Activated CD4-positive, alpha-beta memory T cell treated with anti-CD3 and anti-CD28 coated beads, Interleukin-2, amount 10 ng/mL, durations not matched to agents 7 days and 5 days (primary cell): ENCODE measurements at regions of chr19 and their contacts with region 1.

Region 1: DNA sequence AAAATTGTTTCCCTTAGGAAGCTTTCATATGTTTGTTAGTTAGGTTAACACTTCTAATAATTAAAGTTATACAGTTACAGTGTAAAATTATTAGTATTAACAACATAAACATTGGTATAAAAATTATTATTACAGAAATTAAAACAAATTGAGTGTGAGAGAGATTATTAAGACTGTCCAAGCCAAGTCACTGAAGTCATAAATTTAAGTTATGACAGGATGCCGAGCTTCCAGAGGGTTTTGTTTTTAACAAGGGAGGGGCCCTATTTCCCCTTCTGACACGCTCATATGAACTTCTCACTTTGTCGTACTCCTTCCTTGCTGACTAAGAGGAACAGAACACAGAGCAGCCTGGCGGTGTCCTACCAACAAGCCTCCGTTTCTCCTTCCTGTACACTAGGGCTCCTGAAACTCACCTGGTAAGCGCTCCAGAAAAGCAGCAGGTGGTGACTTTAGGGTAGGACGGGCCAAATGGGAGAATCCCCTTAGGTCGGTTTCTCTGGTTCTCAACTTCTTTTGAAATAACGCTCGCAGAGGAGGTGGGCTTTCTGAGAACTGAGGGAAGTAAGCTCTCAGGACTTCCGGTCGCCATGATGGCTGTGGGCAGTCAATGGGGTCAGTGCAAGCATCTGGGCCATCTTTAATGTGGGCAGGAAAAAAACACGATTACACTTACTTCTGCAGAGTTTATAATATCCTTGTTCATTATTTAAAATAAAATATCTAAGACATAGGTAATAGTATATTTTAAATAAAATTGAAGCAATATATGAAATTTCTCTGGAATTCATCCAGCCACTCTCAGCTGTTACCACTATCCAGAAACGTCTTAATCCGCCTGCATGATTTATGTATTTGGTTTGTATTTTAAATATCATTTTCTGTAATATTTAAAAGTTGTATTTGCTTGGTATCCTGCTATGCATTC is at the start of gene CARD8:
- DNase-seq: peak; percentile 86
- H3K4me3 Mint-ChIP-seq: peak within 1 kb of the TSS; percentile 98
- H3K27ac Mint-ChIP-seq: peak within 1 kb of the TSS; percentile 95
- H3K4me1 Mint-ChIP-seq: peaks cover 68% of the 10 kb centered on the region
- H3K27me3 Mint-ChIP-seq: no peaks in the 10 kb centered on the region
- total RNA-seq, gene CARD8: 247 to 253 TPM

Region 2: GRCh38 chr19:48170038-48170812 is 85.4 kb before region 1 on chr19 and contains the starts of genes LIG1 and ZSWIM9:
- CTCF ChIA-PET with region 1: interaction called, 5 read pairs
- POLR2A ChIA-PET with region 1: interaction called, 14 read pairs
- DNase-seq: peak; percentile 93
- H3K4me3 Mint-ChIP-seq: peak within 1 kb of the TSS; percentile 97
- H3K27ac Mint-ChIP-seq: peak within 1 kb of the TSS; percentile 94
- H3K4me1 Mint-ChIP-seq: peaks cover 56% of the 10 kb centered on the region
- H3K27me3 Mint-ChIP-seq: no peaks in the 10 kb centered on the region
- total RNA-seq, gene LIG1: 137 to 146 TPM
- total RNA-seq, gene ZSWIM9: 7.0 to 7.8 TPM

Region 3: DNA sequence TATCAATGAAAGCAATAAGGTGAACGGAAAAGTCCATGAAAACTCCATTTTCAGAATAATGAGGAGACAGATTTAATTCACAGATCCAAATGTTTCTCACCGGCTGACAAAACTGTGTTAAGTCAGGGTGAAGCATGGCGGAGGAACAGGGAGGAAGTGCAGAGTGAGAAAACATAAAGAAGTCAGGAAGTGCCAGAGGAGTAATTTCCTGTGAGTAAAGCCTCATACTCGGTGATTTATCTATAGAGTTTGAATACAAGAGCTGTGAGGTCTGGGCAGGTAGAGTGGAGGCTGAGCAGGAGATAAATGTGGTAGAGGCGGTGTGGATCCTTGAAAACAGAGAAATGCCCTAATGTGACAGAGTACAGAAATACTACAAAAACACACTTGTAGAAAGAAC is 11.4 kb before region 1 on chr19:
- CTCF ChIA-PET with region 1: interaction called, 29 read pairs
- POLR2A ChIA-PET with region 1: interaction called, 69 read pairs
- DNase-seq: peak; percentile 45
- H3K4me3 Mint-ChIP-seq: peak overlapping the region; percentile 70
- H3K27ac Mint-ChIP-seq: peak overlapping the region; percentile 80
- H3K4me1 Mint-ChIP-seq: peaks cover 58% of the 10 kb centered on the region
- H3K27me3 Mint-ChIP-seq: no peaks in the 10 kb centered on the region

Region 4: GRCh38 chr19:48321622-48322591 is 66.3 kb after region 1 on chr19:
- CTCF ChIA-PET with region 1: interaction called, 9 read pairs
- POLR2A ChIA-PET with region 1: interaction called, 10 read pairs
- DNase-seq: peak; percentile 100
- H3K4me3 Mint-ChIP-seq: peak overlapping the region; percentile 83
- H3K27ac Mint-ChIP-seq: peak overlapping the region; percentile 98
- H3K4me1 Mint-ChIP-seq: peaks cover 58% of the 10 kb centered on the region
- H3K27me3 Mint-ChIP-seq: no peaks in the 10 kb centered on the region